HEK293T (cell line): ENCODE measurements at regions of chr22 and their contacts with region 1.

Region 1: GRCh38 chr22:41762980-41763779 is 37.3 kb upstream of the CCDC134 start:
- DNase-seq: peak; percentile 71

Region 2: DNA sequence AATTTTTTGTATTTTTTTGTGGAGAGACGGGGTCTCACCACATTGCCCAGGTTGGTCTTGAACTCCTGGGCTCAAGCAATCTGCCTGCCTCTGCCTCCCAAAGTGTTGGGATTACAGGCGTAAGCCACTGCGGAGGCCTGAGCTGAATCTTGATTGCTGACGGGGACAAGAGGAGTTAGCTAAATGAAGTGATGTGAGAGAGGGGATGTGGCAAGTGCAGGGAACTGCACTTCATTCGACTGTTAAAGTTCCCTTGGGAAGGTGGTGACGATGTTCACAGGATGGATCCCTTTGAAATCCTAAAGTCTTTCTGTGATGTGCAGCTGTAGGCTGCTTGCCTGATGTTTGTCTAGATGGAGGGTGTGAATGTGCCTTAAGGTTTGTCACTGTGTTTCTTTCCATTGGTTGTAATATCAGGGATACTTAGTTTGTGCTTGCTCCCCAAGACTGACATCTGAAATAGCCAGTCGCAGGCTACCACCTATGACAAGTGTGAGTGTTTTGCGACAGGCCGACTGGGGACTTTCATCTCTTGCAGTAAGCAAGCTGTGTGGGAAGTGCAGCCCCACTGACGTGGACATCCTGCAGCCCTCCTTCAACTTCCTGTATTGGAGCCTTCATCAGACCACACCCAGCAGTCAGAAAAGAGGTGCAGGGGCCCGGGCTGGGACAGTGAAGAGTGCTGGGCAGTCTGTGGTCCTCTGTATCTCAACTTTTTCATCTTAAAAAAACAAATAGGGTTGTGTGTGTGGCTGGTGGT is 17.7 kb after region 1 on chr22:
- CTCF ChIA-PET with region 1: interaction called, 12 read pairs
- POLR2A ChIA-PET with region 1: no interaction called
- DNase-seq: no peak

Region 3: DNA sequence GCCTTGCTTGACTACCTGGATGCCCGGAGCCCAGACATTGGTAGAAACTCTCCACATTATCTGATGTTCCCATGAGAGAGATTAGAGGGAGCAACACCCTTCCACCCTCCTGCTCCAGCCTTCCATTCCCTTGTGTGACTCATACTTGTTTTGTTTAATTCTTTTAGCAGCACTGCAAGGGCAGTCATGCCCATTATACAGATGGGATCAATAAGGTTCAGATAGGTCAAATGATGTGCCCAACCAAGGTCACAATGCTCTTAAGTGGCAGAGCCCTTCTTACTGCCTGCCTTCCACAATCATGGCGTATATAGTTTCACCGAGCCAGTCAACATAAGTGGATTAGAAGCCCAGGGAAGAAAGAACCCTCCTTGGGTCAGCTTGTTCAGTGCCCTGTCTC is 30.7 kb after region 1 on chr22:
- CTCF ChIA-PET with region 1: no interaction called
- POLR2A ChIA-PET with region 1: no interaction called
- DNase-seq: no peak

Region 4: DNA sequence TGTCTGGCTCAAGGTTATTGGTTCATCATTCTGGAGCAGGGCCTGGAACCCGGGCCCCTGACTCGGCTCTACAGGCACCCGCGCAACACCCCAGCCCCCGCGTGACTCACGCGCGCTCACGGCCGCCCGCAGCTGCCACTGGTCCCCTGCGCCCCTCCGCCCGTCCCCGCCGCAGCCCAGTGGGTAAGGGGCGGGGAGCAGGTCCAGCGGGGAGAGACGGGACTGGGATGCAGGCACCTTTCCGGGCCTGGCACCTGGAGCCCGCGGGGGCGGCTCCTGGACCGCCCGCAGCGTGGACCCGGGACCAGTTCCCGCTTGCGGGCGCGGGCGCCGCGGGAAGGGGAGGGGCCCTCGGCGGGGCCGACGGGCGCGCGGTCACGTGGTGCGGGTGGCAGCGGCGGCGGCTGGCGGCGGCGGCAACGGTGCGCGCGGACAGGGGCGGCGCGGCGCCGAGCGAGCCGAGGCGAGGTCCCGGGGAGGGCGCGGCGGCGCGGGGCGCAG is 213.3 kb after region 1 on chr22:
- CTCF ChIA-PET with region 1: no interaction called
- POLR2A ChIA-PET with region 1: no interaction called
- DNase-seq: peak; percentile 71